G401 (cell line): ENCODE measurements at regions of chr15 and their contacts with region 1.

Region 1: DNA sequence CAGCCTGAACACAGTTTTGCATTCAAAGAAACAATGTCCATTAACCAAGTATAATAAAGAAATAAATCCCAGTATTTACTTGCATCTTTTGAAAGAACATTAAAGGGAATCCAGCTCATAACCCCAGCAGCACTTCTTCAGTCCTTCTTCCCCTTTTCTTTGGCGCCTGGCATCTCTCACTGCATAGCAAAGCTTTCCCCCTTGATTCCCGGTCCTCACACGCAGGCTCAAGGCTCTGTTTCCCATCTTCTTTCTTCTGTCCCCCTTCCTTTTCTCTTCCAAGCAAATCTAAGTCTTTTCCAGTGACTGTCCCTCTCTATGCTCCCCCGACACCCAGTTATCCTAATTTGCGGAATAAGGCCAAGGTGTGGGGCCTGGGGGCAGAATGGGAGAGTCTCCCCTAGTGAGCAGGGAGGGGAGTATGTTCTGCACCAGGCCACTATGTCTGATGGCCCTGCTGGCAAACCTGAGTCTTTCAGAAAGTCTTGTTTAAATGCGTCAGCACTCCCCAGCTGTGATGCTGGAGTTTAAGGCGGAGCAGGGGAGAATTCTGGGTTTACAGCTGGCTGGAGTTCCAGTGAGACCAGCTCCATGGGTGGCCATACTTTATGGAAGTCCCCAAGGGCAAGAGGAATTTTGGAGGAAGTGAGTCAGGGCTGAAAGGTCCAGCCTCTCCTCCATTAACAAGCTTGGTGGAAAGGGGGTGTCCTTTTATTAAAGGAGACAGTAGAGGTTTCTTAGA is 42.1 kb downstream of the GOLGA6A start:
- DNase-seq: no peak

Region 2: DNA sequence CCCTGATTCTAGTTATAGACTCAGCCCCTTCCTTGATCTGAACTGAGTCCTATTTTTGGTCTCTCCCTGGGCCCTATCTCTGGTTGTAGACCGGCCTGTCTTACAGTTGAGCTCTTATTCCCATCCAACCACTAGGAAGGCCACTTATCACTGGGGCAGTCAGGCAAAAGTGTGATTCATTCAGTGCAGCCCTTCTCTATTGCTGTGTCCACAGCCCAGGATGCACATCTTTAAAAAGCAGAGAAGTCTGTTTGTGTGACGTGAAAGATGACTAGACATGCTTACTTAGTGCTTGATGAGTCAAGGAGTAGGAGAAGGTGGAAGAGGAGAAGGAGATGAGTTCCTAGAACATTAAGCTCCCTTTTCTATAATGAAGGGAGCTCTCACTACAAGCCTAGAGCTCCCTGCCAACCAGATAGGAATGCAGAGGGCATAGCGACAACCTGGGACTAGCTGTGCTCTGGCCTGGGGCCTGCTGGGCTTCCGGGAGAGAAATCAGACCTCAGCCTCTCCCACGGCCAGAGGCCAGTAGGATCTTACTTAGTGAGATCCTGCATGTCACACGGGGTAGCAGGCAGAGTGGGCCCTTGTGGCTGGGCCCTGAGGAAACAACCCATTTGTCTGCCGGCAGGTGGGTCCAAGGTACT is 312.8 kb before region 1 on chr15:
- in situ Hi-C with region 1: no loop called
- DNase-seq: no peak

Region 3: GRCh38 chr15:73972984-73973682 is 67.1 kb before region 1 on chr15:
- in situ Hi-C with region 1: loop called (anchors 10 kb)
- DNase-seq: peak; percentile 84